CD8-positive, alpha-beta memory T cell (primary cell): ENCODE measurements at regions of chr3 and their contacts with region 1.

Region 1: GRCh38 chr3:187319699-187320302 is 28.3 kb upstream of the MASP1 start:
- DNase-seq: peak; percentile 21 to 55 (median 30)
- H3K4me3 ChIP-seq: peak overlapping the region; percentile 3
- H3K4me3 Mint-ChIP-seq: no peak overlapping the region
- H3K27ac ChIP-seq: no peak overlapping the region
- H3K27ac Mint-ChIP-seq: no peak overlapping the region
- H3K4me1 ChIP-seq: peaks cover 12% of the 10 kb centered on the region
- H3K4me1 Mint-ChIP-seq: peaks cover 15 to 18% (median 15%) of the 10 kb centered on the region in 3 donors
- H3K27me3 ChIP-seq: peaks cover 10% of the 10 kb centered on the region
- H3K27me3 Mint-ChIP-seq: peaks cover 20 to 59% of the 10 kb centered on the region in 2 donors

Region 2: GRCh38 chr3:187016639-187017345 is 303.0 kb before region 1 on chr3:
- CTCF ChIA-PET with region 1: no interaction called
- POLR2A ChIA-PET with region 1: no interaction called
- DNase-seq: no peak
- H3K4me3 ChIP-seq: no peak overlapping the region
- H3K4me3 Mint-ChIP-seq: peak overlapping the region in 2 of 7 donors; percentile 33 to 64
- H3K27ac ChIP-seq: no peak overlapping the region
- H3K27ac Mint-ChIP-seq: peak overlapping the region in 7 of 8 donors; percentile 66 to 94 (median 84)
- H3K4me1 ChIP-seq: peaks cover 58% of the 10 kb centered on the region
- H3K4me1 Mint-ChIP-seq: peaks cover 66 to 88% (median 88%) of the 10 kb centered on the region in 3 donors
- H3K27me3 ChIP-seq: no peaks in the 10 kb centered on the region
- H3K27me3 Mint-ChIP-seq: no peaks in the 10 kb centered on the region

Region 3: GRCh38 chr3:187305881-187306280 is 13.9 kb before region 1 on chr3:
- CTCF ChIA-PET with region 1: interaction called, 15 read pairs
- POLR2A ChIA-PET with region 1: no interaction called
- DNase-seq: no peak
- H3K4me3 ChIP-seq: no peak overlapping the region
- H3K4me3 Mint-ChIP-seq: no peak overlapping the region
- H3K27ac ChIP-seq: no peak overlapping the region
- H3K27ac Mint-ChIP-seq: peak overlapping the region in 1 of 8 donors; percentile 28
- H3K4me1 ChIP-seq: no peaks in the 10 kb centered on the region
- H3K4me1 Mint-ChIP-seq: no peaks in the 10 kb centered on the region
- H3K27me3 ChIP-seq: no peaks in the 10 kb centered on the region
- H3K27me3 Mint-ChIP-seq: peaks cover 20 to 45% of the 10 kb centered on the region in 2 donors

Region 4: GRCh38 chr3:187336322-187336721 is 16.5 kb after region 1 on chr3:
- CTCF ChIA-PET with region 1: interaction called, 13 read pairs
- POLR2A ChIA-PET with region 1: no interaction called
- DNase-seq: no peak
- H3K4me3 ChIP-seq: no peak overlapping the region
- H3K4me3 Mint-ChIP-seq: no peak overlapping the region
- H3K27ac ChIP-seq: no peak overlapping the region
- H3K27ac Mint-ChIP-seq: no peak overlapping the region
- H3K4me1 ChIP-seq: no peaks in the 10 kb centered on the region
- H3K4me1 Mint-ChIP-seq: no peaks in the 10 kb centered on the region
- H3K27me3 ChIP-seq: no peaks in the 10 kb centered on the region
- H3K27me3 Mint-ChIP-seq: peaks cover 14 to 31% of the 10 kb centered on the region in 2 donors

Region 5: DNA sequence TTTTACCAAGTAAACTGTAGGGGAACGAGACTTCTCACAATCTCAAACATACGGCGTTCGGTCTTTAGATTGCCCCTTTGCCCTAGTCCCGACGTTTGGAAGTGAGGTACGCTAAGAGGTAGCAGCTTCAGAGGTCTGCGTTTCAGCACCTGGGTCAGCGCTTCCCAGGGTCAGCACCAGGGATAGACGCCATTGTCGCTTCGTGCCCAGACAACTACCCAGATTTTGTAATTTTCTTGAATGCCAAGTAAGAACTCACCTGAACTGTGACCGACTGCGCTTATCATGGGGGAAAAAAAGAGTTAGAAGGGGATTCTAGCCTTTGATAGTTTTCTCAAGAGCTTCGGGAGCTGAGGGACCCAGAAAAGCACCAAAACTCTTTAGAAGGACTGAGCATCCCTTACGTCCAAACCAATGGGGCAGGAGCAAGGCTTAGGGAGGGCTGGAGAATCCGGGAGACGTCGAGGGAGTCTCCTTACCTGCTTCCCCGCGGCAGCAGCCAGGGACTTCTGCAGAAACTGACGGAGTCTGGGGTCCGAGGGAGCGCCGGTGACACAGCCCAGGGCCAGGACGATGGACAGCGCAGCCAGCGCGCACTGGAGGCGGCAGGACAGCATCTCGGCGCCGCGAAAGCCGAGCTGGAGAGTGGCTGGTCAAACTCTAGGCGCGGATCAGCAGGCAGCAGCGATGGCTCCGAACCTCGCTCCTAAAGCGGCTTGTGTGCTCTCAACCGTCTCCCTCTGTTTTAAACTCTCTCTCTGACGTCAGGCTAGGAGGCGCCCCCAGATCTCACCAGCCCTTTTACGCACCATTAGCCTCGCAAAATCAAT is 350.1 kb after region 1 on chr3 and contains the start of gene SST:
- CTCF ChIA-PET with region 1: interaction called, 228 read pairs
- POLR2A ChIA-PET with region 1: no interaction called
- DNase-seq: no peak
- H3K4me3 ChIP-seq: no peak within 1 kb of the TSS
- H3K4me3 Mint-ChIP-seq: no peak within 1 kb of the TSS
- H3K27ac ChIP-seq: no peak within 1 kb of the TSS
- H3K27ac Mint-ChIP-seq: no peak within 1 kb of the TSS
- H3K4me1 ChIP-seq: no peaks in the 10 kb centered on the region
- H3K4me1 Mint-ChIP-seq: no peaks in the 10 kb centered on the region
- H3K27me3 ChIP-seq: peaks cover 3% of the 10 kb centered on the region
- H3K27me3 Mint-ChIP-seq: peaks cover 35 to 79% of the 10 kb centered on the region in 2 donors
- total RNA-seq, gene SST: not detected

Region 6: GRCh38 chr3:187679638-187680396 is 360.0 kb after region 1 on chr3:
- CTCF ChIA-PET with region 1: interaction called, 228 read pairs
- POLR2A ChIA-PET with region 1: no interaction called
- DNase-seq: peak; percentile 30 to 70 (median 50)
- H3K4me3 ChIP-seq: no peak overlapping the region
- H3K4me3 Mint-ChIP-seq: no peak overlapping the region
- H3K27ac ChIP-seq: no peak overlapping the region
- H3K27ac Mint-ChIP-seq: peak overlapping the region in 2 of 8 donors; percentile 23 to 46
- H3K4me1 ChIP-seq: no peaks in the 10 kb centered on the region
- H3K4me1 Mint-ChIP-seq: peaks cover 0 to 4% (median 2%) of the 10 kb centered on the region in 3 donors
- H3K27me3 ChIP-seq: no peaks in the 10 kb centered on the region
- H3K27me3 Mint-ChIP-seq: peaks cover 13 to 58% of the 10 kb centered on the region in 2 donors

Region 7: DNA sequence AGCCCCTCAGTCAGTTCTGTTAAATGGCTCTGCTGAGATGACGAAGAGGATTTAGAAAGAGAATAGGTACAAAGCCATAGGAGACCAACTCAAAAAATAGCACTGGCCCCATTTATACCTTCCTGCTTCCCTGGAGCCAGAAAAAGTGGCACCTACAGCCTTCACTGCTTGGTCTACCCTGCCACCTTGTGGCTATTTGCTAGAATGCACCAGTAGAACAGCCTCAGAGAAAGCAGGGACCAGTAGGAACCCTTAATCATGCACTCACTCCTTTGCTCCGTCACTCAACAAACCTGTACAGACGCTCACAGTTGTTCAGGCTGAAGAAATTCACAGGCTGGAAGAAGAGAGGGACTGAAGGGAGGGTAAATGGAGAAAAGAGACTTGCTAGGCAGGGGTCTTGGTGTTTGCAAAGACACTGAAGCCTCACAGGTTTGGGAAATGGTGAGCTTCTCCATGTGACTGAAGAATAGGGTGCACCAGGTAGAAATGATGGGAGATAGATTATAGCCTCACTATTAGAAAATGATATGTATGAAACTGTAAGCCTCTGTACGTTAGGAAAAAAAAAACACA is 394.7 kb after region 1 on chr3:
- CTCF ChIA-PET with region 1: interaction called, 79 read pairs
- POLR2A ChIA-PET with region 1: no interaction called
- DNase-seq: peak; percentile 47 to 79 (median 61)
- H3K4me3 ChIP-seq: no peak overlapping the region
- H3K4me3 Mint-ChIP-seq: peak overlapping the region in 1 of 7 donors; percentile 57
- H3K27ac ChIP-seq: no peak overlapping the region
- H3K27ac Mint-ChIP-seq: peak overlapping the region in 5 of 8 donors; percentile 2 to 72 (median 10)
- H3K4me1 ChIP-seq: peaks cover 6% of the 10 kb centered on the region
- H3K4me1 Mint-ChIP-seq: peaks cover 13 to 17% (median 17%) of the 10 kb centered on the region in 3 donors
- H3K27me3 ChIP-seq: no peaks in the 10 kb centered on the region
- H3K27me3 Mint-ChIP-seq: no peaks in the 10 kb centered on the region

Region 8: GRCh38 chr3:187719628-187720336 is 400.0 kb after region 1 on chr3:
- CTCF ChIA-PET with region 1: interaction called, 79 read pairs
- POLR2A ChIA-PET with region 1: no interaction called
- DNase-seq: no peak
- H3K4me3 ChIP-seq: no peak overlapping the region
- H3K4me3 Mint-ChIP-seq: no peak overlapping the region
- H3K27ac ChIP-seq: no peak overlapping the region
- H3K27ac Mint-ChIP-seq: no peak overlapping the region
- H3K4me1 ChIP-seq: no peaks in the 10 kb centered on the region
- H3K4me1 Mint-ChIP-seq: no peaks in the 10 kb centered on the region
- H3K27me3 ChIP-seq: no peaks in the 10 kb centered on the region
- H3K27me3 Mint-ChIP-seq: no peaks in the 10 kb centered on the region

Region 9: GRCh38 chr3:188021502-188022040 is 701.8 kb after region 1 on chr3:
- CTCF ChIA-PET with region 1: no interaction called
- POLR2A ChIA-PET with region 1: no interaction called
- DNase-seq: no peak
- H3K4me3 ChIP-seq: no peak overlapping the region
- H3K4me3 Mint-ChIP-seq: no peak overlapping the region
- H3K27ac ChIP-seq: no peak overlapping the region
- H3K27ac Mint-ChIP-seq: no peak overlapping the region
- H3K4me1 ChIP-seq: no peaks in the 10 kb centered on the region
- H3K4me1 Mint-ChIP-seq: no peaks in the 10 kb centered on the region
- H3K27me3 ChIP-seq: no peaks in the 10 kb centered on the region
- H3K27me3 Mint-ChIP-seq: peaks cover 0 to 6% of the 10 kb centered on the region in 2 donors